MCF 10A (cell line): ENCODE measurements at regions of chr7 and their contacts with region 1.

Region 1: DNA sequence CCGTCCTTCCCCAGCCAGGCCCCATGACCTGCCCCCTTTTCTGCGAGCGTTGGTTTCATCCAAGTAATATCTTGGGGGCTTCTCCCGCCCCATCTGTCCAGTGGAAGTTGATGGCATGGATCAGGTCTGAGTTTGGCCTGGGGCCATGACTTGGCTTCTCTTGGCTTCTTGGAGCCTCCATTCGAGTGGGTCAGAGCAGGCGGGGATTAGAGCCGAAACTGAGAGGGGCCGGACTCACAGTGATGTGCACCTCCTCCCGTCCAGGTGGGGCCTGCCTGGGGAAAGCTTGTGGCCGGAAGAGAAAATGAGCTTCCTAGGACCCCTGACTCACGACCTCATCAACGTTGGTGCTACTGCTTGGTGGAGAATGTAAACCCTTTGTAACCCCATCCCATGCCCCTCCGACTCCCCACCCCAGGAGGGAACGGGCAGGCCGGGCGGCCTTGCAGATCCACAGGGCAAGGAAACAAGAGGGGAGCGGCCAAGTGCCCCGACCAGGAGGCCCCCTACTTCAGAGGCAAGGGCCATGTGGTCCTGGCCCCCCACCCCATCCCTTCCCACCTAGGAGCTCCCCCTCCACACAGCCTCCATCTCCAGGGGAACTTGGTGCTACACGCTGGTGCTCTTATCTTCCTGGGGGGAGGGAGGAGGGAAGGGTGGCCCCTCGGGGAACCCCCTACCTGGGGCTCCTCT is 15.1 kb upstream of the LIMK1 start:
- DNase-seq: no peak
- H3K4me3 Mint-ChIP-seq: no peak overlapping the region
- H3K27ac Mint-ChIP-seq: no peak overlapping the region
- H3K4me1 Mint-ChIP-seq: no peaks in the 10 kb centered on the region
- H3K27me3 Mint-ChIP-seq: no peaks in the 10 kb centered on the region
- CTCF ChIP-seq: no peak

Region 2: GRCh38 chr7:74104703-74105102 is 36.2 kb after region 1 on chr7:
- CTCF ChIA-PET with region 1: interaction called, 11 read pairs
- POLR2A ChIA-PET with region 1: no interaction called
- intact Hi-C with region 1: no loop called
- DNase-seq: peak; percentile 63
- H3K4me3 Mint-ChIP-seq: no peak overlapping the region
- H3K27ac Mint-ChIP-seq: no peak overlapping the region
- H3K4me1 Mint-ChIP-seq: no peaks in the 10 kb centered on the region
- H3K27me3 Mint-ChIP-seq: no peaks in the 10 kb centered on the region
- CTCF ChIP-seq: no peak

Region 3: DNA sequence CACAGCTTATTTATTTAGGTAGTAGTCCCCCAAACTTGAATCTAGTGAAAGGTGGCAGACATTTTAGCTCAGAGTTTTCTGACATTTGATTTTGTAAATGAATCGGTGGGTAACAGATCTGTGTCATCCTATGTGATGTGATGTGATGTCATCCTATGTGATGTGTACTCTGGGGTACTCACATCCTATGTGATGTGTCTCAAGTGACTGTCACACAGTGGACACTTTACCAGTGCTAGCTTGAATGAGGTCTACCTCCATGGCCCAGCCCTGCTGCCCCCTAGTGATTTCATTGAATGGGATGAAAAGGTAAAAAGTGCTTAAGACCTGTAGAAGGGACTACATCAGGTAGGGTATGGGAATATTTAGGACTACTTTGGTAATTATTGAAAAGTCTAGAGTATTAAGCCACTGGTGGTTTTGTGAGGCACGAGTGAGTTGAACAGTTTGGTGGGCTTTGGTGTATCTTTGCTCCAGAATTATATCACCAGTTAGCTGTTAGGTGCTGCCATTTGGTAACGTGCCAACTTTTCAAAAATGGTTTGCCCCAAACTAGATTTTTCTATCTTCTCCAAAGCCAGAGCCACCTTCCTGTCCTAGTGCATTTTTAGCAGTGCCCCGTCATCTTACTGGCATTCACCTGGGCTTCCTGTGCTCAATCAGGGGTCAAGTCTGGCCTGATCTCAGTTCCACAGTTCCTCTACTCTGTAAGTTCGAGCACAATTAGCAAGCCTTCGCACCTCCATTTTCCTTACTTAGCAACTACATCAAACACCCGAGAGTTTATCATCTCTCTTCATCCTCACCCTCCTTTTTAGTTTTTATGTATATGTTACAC is 115.3 kb after region 1 on chr7:
- CTCF ChIA-PET with region 1: interaction called, 16 read pairs
- POLR2A ChIA-PET with region 1: interaction called, 4 read pairs
- intact Hi-C with region 1: loop called (anchors 1 kb)
- DNase-seq: peak; percentile 46
- H3K4me3 Mint-ChIP-seq: peak overlapping the region; percentile 4
- H3K27ac Mint-ChIP-seq: no peak overlapping the region
- H3K4me1 Mint-ChIP-seq: peaks cover 46% of the 10 kb centered on the region
- H3K27me3 Mint-ChIP-seq: no peaks in the 10 kb centered on the region
- CTCF ChIP-seq: peak; percentile 20

Region 4: DNA sequence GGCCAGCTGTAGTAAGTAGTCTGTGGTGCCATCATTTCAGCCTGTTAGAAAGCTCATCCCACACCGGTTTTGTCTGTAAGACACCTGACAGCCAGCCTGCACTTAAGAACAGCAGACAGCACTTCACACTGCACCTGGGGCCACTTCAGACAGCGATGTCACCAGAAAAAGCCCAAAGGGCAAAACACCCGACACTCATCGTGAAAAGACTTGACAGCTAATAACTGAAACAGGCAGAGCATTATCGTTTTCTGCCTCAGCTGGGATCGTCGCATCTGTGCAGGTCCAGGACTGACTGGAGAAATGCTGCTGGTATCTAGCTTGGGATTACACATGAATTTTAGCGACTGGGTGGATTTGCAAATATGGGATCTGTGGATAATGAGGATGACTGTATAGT is 124.5 kb after region 1 on chr7:
- CTCF ChIA-PET with region 1: interaction called, 11 read pairs
- POLR2A ChIA-PET with region 1: interaction called, 4 read pairs
- intact Hi-C with region 1: no loop called
- DNase-seq: no peak
- H3K4me3 Mint-ChIP-seq: no peak overlapping the region
- H3K27ac Mint-ChIP-seq: no peak overlapping the region
- H3K4me1 Mint-ChIP-seq: peaks cover 3% of the 10 kb centered on the region
- H3K27me3 Mint-ChIP-seq: no peaks in the 10 kb centered on the region
- CTCF ChIP-seq: no peak